Activated CD4-positive, alpha-beta T cell treated with anti-CD3 and anti-CD28 coated beads for 36 hours (primary cell): ENCODE measurements at regions of chr12 and their contacts with region 1.

Region 1: DNA sequence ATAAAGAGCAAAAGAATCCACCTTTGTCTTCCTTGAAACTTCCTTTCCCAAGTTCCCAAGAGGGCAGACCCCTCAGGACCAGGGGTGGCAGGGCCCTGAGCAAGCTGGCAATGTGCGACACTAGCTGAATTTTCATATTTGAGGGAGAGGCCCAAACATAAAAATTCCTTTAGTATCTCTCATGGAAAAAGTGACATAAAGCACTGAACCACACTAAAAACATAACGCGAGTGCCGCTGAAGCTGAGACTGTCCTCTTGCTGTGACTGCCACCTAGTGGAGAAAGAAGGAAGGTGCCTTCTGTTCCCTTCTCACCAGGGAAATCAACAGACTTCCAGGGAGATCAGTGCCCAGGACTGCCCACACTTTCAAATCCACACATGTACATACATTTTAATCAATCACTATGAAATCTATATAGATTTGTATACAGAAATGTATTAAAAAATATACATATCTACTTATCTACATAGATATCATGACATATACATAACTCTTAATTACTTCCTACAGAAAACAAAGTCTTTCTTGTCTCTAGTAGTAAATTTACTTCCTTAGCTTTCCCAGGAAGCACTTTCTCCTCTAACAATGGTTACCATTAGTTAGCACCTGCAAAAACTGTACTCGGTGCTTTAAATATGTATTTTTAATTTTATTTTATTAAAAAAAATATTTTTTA is 53.8 kb downstream of the SSH1 start:
- DNase-seq: peak; percentile 80
- ATAC-seq: peak; percentile 91
- H3K4me3 Mint-ChIP-seq: no peak overlapping the region
- H3K27ac Mint-ChIP-seq: peak overlapping the region; percentile 37
- H3K4me1 Mint-ChIP-seq: peaks cover 6% of the 10 kb centered on the region
- H3K27me3 Mint-ChIP-seq: no peaks in the 10 kb centered on the region

Region 2: GRCh38 chr12:108568338-108569154 is 235.0 kb before region 1 on chr12:
- CTCF ChIA-PET with region 1: interaction called, 25 read pairs
- POLR2A ChIA-PET with region 1: no interaction called
- intact Hi-C with region 1: loop called (anchors 1 kb)
- DNase-seq: peak; percentile 86
- ATAC-seq: peak; percentile 87
- H3K4me3 Mint-ChIP-seq: peak overlapping the region; percentile 29
- H3K27ac Mint-ChIP-seq: peak overlapping the region; percentile 89
- H3K4me1 Mint-ChIP-seq: peaks cover 84% of the 10 kb centered on the region
- H3K27me3 Mint-ChIP-seq: no peaks in the 10 kb centered on the region

Region 3: DNA sequence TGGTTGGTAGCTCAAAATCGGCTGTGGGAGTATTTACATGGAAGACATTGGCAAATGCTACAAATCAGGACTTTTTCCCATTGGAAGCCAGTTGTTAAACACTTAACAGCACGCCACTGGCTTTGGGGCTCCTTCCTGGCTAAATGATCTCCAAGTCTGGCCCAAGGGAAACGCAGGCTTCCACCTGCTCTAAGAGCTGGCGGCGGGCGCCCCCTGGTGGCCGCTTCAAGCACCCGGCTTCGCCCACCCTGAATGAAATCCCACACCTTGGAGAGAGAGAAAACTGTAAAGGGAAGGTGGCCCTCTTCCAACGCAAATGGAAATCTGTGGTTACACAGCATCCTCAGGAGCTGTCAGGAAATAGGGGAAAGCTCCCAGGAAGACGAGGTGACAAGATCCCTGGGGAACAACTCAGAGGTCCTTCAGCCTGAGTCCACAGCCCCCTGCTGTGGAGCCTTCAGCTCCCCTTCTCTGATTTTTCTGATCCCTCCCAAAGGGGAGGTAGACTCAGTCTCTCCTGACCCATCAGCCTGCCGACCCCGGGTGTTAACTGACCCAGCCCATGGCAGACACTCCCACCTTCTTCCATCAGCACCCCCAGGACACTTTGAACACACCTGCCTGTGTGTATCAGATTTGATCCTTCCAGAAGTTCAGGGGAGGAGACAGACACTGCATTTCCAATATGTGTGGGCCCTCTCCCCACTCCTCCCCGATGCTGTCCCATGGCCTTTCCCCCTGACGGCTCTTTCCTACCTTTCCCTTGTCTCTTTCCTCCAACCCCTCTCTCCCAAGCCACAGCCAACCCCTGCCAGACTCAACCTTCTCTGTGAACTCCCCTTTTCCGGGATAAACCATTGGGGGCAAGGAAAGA is 185.3 kb before region 1 on chr12:
- CTCF ChIA-PET with region 1: interaction called, 11 read pairs
- POLR2A ChIA-PET with region 1: no interaction called
- intact Hi-C with region 1: loop called in 1 of 2 experiments (anchors 2 kb)
- DNase-seq: peak; percentile 88
- ATAC-seq: peak; percentile 46
- H3K4me3 Mint-ChIP-seq: no peak overlapping the region
- H3K27ac Mint-ChIP-seq: peak overlapping the region; percentile 62
- H3K4me1 Mint-ChIP-seq: peaks cover 40% of the 10 kb centered on the region
- H3K27me3 Mint-ChIP-seq: no peaks in the 10 kb centered on the region

Region 4: GRCh38 chr12:108649669-108650068 is 153.9 kb before region 1 on chr12:
- CTCF ChIA-PET with region 1: interaction called, 12 read pairs
- POLR2A ChIA-PET with region 1: no interaction called
- intact Hi-C with region 1: no loop called
- DNase-seq: no peak
- ATAC-seq: no peak
- H3K4me3 Mint-ChIP-seq: no peak overlapping the region
- H3K27ac Mint-ChIP-seq: peak overlapping the region; percentile 35
- H3K4me1 Mint-ChIP-seq: peaks cover 41% of the 10 kb centered on the region
- H3K27me3 Mint-ChIP-seq: no peaks in the 10 kb centered on the region

Region 5: DNA sequence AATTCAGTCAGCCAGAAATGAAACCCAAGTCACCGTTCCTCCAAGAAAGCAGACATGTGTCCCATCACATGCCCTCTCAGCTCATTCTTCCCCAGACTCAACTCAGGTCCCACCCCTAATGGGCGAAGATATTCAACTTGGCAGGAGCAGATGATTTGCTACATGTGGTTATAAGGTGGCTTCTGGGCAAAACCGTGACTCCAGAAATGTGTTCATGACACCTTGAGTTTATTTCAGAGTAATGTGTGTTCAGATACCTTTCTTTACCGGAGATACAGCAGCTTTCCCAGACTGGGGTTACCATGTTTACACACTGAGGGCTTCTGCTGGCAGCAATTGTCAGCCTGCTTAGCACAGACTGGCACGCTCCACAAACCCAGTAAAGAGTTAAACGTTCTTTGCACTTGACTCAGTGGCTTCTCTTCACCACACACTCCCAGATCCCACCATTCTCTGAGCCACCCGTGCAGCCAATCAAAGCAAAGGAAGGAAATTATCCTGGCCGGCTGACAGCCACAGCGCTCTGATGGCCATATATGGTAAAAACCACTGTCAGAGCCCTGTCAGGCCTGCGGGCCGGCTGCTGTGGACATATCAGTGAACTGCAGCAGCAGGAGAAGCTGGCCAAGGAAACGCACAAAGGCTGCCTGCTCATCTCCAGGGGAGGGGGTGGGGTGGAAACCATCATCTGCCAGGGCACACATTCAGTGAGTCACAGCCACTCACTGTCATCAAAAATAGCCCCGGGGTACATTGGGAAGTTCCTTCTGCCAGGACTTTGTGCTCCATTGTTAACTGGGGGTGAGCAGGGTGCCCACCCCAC is 112.2 kb before region 1 on chr12:
- CTCF ChIA-PET with region 1: interaction called, 11 read pairs
- POLR2A ChIA-PET with region 1: no interaction called
- intact Hi-C with region 1: loop called in 1 of 2 experiments (anchors 1 kb)
- DNase-seq: peak; percentile 92
- ATAC-seq: peak; percentile 63
- H3K4me3 Mint-ChIP-seq: peak overlapping the region; percentile 67
- H3K27ac Mint-ChIP-seq: peak overlapping the region; percentile 96
- H3K4me1 Mint-ChIP-seq: peaks cover 80% of the 10 kb centered on the region
- H3K27me3 Mint-ChIP-seq: no peaks in the 10 kb centered on the region

Region 6: DNA sequence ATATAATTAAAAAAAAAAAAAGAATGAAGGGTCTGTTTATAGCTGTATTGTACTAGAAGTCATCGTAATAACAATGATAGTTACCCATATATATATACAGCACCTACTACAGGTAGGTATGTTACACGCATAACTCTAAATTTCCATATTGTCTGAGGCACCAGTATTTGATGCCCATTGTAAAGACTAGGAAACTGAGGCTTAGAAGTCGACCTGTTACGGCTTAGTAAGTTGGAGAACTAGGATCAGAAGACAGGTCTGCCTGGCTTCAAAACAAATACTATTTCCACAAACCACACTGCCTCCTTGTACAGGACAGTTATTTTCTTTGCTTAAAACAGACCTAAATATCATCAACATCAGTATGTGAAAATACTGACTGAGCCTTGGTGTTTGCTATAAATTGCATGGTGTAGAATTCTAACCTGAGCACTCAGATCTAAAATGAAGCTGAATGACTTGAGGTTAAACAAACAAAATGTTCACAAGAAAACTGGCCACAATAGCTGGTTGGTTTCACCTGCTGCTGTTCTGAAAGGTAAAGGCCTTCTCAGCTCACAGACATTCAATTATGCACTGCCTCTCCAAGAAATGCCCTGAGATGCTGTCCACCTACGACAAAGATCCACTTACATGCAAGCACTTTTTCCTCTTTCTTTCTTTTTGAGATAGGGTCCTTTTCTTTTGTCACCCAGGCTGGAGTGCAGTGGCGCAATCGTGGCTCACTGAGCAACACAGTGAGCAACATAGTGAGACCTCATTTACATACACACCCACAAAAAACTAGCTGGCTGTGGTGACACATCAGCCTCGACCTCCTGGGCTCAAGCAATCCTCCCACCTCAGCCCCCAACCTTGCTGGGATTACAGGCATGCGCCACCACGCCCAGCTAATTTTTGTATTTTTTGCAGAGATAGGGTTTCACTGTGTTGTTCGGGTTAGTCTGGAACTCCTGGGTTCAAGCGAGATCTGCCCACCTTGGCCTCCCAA is 18.1 kb after region 1 on chr12:
- CTCF ChIA-PET with region 1: interaction called, 15 read pairs
- POLR2A ChIA-PET with region 1: no interaction called
- intact Hi-C with region 1: no loop called
- DNase-seq: peak; percentile 64
- ATAC-seq: peak; percentile 83
- H3K4me3 Mint-ChIP-seq: no peak overlapping the region
- H3K27ac Mint-ChIP-seq: peak overlapping the region; percentile 52
- H3K4me1 Mint-ChIP-seq: peaks cover 31% of the 10 kb centered on the region
- H3K27me3 Mint-ChIP-seq: no peaks in the 10 kb centered on the region

Region 7: GRCh38 chr12:108876550-108876949 is 73.0 kb after region 1 on chr12:
- CTCF ChIA-PET with region 1: no interaction called
- POLR2A ChIA-PET with region 1: no interaction called
- intact Hi-C with region 1: no loop called
- DNase-seq: no peak
- ATAC-seq: peak; percentile 30
- H3K4me3 Mint-ChIP-seq: no peak overlapping the region
- H3K27ac Mint-ChIP-seq: no peak overlapping the region
- H3K4me1 Mint-ChIP-seq: no peaks in the 10 kb centered on the region
- H3K27me3 Mint-ChIP-seq: no peaks in the 10 kb centered on the region